Activated CD8-positive, alpha-beta T cell treated with anti-CD3 and anti-CD28 coated beads, Interleukin-2, amount 10 ng/mL, durations not matched to agents 7 days and 5 days (primary cell): ENCODE measurements at regions of chr14 and their contacts with region 1.

Region 1: GRCh38 chr14:91228112-91229004 is 16.1 kb downstream of the GPR68 start:
- DNase-seq: peak; percentile 87
- ATAC-seq: peak; percentile 76
- H3K4me3 Mint-ChIP-seq: peak overlapping the region; percentile 75
- H3K27ac Mint-ChIP-seq: peak overlapping the region; percentile 97
- H3K4me1 Mint-ChIP-seq: peaks cover 96% of the 10 kb centered on the region
- H3K27me3 Mint-ChIP-seq: no peaks in the 10 kb centered on the region

Region 2: DNA sequence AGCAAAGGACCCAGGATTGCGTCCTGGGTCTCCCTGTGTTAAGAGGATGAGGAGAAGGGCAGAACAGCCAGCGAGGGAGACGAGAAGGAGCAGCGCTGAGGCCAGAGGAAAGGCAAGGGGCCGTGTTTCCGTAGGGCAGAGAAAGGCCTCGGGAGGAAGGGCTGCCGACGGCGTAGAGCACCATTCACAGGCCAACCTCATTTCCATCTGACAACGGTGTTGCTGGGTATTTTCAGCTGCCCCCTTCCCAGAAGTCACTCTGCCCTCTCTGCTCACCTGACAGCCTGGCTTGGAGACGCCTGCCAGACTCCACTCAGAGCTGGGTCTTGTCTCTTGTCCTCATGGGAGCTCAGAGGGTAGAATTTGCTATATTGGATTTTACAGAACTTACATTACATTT is 35.3 kb before region 1 on chr14:
- CTCF ChIA-PET with region 1: interaction called, 5 read pairs
- POLR2A ChIA-PET with region 1: interaction called, 14 read pairs
- DNase-seq: no peak
- ATAC-seq: no peak
- H3K4me3 Mint-ChIP-seq: no peak overlapping the region
- H3K27ac Mint-ChIP-seq: peak overlapping the region; percentile 7
- H3K4me1 Mint-ChIP-seq: peaks cover 52% of the 10 kb centered on the region
- H3K27me3 Mint-ChIP-seq: no peaks in the 10 kb centered on the region

Region 3: GRCh38 chr14:91249841-91250616 is 21.7 kb after region 1 on chr14:
- CTCF ChIA-PET with region 1: interaction called, 85 read pairs
- POLR2A ChIA-PET with region 1: interaction called, 541 read pairs
- DNase-seq: peak; percentile 81
- ATAC-seq: peak; percentile 52
- H3K4me3 Mint-ChIP-seq: peak overlapping the region; percentile 66
- H3K27ac Mint-ChIP-seq: peak overlapping the region; percentile 93
- H3K4me1 Mint-ChIP-seq: peaks cover 89% of the 10 kb centered on the region
- H3K27me3 Mint-ChIP-seq: no peaks in the 10 kb centered on the region

Region 4: DNA sequence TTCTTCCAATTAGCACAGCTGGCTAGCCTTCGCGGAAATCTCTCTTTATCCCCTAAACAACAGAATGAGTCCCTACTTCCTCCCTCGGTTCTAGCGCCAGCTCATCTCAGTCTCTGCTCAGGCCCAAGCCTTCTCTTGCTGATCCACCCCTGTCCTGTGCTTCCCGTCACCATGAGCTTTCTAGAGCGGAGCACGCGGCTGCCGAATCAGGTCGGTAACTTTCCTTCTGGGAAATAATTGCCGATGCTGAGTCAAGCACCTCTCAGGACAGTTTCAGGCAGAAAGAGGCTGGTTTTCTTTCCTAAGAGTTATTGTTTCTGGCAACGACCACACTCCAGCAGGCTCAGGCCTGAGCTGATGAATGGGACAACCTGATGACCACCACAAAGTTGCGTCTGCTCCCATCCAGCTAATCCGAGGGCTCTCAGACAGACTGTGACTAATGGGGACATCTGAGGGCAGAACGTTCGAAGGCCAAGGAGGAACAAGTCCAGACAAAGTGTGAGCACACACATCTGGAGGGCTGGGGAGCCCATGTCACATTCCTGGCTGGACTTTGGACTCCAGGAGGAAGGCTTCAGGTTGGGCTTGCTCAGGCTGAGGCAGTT is 29.8 kb after region 1 on chr14:
- CTCF ChIA-PET with region 1: interaction called, 4 read pairs
- POLR2A ChIA-PET with region 1: interaction called, 91 read pairs
- DNase-seq: no peak
- ATAC-seq: no peak
- H3K4me3 Mint-ChIP-seq: no peak overlapping the region
- H3K27ac Mint-ChIP-seq: peak overlapping the region; percentile 71
- H3K4me1 Mint-ChIP-seq: peaks cover 83% of the 10 kb centered on the region
- H3K27me3 Mint-ChIP-seq: no peaks in the 10 kb centered on the region

Region 5: DNA sequence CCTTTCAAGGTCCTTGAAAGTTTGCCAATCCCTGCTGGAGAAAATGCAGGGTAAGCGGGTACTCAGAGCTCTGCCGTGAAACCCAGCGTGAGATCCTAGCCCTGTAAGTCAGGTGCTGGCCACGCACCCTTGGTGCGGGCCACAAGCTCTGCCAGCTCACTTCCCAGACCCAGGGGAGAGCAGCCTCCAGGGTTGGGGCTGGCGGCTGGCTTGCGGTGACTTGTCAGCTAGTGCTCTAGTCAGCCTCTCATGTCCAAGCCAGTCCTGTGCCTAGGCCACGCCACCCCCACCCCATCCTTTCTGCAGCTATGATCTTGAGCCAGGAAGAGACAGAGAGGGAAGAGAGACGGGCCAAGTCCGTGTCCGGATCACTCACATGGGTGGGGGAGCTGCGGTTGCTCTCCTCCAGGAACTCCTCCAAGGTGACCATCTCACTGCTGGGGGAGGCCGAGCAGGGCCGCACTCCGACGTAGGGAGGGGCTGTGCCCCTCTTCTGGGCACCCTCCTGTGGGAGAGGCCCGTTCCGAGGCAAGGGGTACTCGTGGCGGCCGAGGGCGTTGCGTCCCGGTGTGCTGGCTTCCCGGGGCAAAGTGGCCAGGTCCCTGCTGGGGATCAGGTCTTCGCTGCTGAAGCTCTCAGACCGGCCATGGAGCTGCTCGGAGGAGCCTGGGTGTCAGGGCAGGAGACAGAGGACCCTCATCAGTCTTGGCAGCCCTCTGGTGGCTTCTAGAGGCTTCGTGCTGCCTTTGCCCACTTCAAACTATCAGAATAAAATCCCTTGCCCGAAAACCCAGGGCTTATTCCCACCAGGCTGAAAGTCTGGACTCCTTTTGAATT is 49.4 kb after region 1 on chr14:
- CTCF ChIA-PET with region 1: no interaction called
- POLR2A ChIA-PET with region 1: no interaction called
- DNase-seq: no peak
- ATAC-seq: no peak
- H3K4me3 Mint-ChIP-seq: no peak overlapping the region
- H3K27ac Mint-ChIP-seq: no peak overlapping the region
- H3K4me1 Mint-ChIP-seq: peaks cover 14% of the 10 kb centered on the region
- H3K27me3 Mint-ChIP-seq: no peaks in the 10 kb centered on the region